ENCODE measurements at regions of chr2 and their contacts with region 1.

Region 1: DNA sequence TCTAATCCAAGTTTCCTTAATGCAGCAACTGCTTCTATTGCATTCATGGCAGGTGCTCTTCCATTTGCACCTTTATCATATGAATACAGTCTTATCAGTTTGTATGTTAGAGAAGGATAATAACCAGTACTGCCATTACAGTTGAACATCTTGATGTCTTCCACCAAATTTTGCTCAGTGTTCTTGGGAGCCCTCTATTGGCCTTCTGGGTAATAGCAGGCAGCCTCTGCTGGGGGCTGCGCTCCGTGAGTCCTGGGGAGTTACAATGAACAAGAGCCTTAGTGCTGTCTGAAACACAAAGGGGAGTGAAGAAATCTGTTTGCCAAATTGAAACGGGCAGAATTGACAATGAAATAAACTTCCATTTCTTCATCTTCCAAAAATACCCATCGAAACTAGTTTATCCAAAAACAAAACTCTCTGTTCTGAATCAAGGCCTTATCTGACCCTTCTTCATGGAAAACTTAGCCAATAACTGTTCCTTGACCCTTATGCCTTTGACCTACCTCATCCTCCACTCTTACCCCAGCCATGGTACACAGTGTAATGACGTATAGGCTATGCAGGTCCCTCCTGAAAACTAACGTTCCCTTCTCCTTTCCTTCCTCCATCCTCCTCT is 79.9 kb downstream of the ALK start:
- DNase-seq: no peak
- ATAC-seq: peak in 1 of 2 donors; percentile 47
- H3K4me3 ChIP-seq: no peak overlapping the region
- H3K27ac ChIP-seq: no peak overlapping the region
- H3K4me1 ChIP-seq: no peaks in the 10 kb centered on the region
- H3K27me3 ChIP-seq: peaks cover 2% of the 10 kb centered on the region

Region 2: DNA sequence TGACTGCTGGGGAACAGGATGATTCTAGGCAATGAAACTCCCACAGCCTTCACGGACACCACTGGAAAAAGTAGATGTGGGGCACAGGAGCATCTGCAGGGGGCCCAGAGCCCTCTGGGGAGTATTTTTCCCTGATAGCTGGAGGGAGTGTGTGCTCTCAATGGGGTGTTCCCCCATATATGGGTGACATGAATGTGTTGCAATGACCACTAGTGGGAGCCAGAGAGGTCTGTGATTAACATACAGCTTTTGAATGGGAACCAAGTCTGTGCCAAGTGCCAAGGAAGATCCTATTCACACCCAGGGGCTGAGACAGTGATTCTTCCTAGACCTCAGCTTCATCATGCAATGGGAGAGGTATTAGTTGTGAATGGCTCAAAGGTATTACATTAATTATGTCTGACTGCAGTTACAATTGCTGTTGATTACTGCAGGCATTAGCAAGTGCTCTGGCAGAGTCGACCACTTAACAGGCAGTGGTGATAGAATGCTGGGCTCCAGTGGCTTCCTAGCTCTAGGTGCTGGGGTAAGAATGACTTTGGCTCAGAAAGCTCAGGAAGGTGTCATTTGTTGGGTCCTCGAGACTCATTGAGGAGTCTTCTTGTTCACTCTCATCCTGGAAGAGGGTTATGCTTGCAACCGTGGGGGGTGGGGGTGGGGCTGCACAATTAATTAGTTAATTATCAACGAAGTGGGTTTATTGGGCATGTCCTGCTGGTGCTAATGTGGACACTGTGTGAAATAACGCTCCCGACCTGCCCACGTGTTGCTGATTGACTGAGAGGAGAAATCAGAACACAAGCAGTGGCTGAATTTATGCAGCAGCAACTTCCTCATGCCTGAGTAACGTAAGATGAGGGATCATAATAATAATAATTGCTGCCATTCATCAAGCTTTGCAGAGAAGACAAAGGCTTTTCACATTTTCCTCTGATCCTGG is 532.1 kb before region 1 on chr2:
- intact Hi-C with region 1: loop called in 2 of 4 experiments (anchors 5 to 10 kb)
- DNase-seq: no peak
- ATAC-seq: peak in 1 of 2 donors; percentile 51
- H3K4me3 ChIP-seq: no peak overlapping the region
- H3K27ac ChIP-seq: no peak overlapping the region
- H3K4me1 ChIP-seq: no peaks in the 10 kb centered on the region
- H3K27me3 ChIP-seq: no peaks in the 10 kb centered on the region

Region 3: DNA sequence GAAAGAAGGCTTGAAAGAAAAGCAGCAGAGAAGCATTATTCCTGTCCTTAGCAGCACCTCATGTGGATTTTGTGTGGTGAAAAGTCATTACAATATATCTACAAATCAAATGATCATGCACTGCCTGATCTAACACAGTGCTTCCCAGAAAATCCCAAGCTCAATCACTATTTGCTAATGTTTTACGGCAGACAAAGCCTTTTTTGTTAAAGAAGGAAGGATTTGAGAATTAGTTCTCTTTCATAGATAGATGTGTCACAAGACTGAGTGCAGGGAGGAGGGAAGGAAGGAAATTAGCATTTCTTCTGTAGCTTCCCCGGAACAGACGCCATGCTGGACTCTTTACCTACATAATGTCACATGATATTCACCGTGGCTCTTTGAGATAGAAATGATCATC is 123.2 kb before region 1 on chr2:
- intact Hi-C with region 1: no loop called
- DNase-seq: no peak
- ATAC-seq: no peak
- H3K4me3 ChIP-seq: no peak overlapping the region
- H3K27ac ChIP-seq: no peak overlapping the region
- H3K4me1 ChIP-seq: no peaks in the 10 kb centered on the region
- H3K27me3 ChIP-seq: peaks cover 2% of the 10 kb centered on the region

Region 4: GRCh38 chr2:29753671-29754444 is 87.6 kb before region 1 on chr2:
- intact Hi-C with region 1: no loop called
- DNase-seq: no peak
- ATAC-seq: no peak
- H3K4me3 ChIP-seq: no peak overlapping the region
- H3K27ac ChIP-seq: no peak overlapping the region
- H3K4me1 ChIP-seq: no peaks in the 10 kb centered on the region
- H3K27me3 ChIP-seq: no peaks in the 10 kb centered on the region

Measured in right cardiac atrium (tissue), 5 donors.